ENCODE measurements at regions of chr6 and their contacts with region 1.

Region 1: GRCh38 chr6:106512048-106512967 is 117.0 kb downstream of the RTN4IP1 start:
- DNase-seq: peak; percentile 96
- H3K4me3 Mint-ChIP-seq: peak overlapping the region; percentile 82
- H3K27ac Mint-ChIP-seq: peak overlapping the region; percentile 96
- H3K4me1 Mint-ChIP-seq: peaks cover 50% of the 10 kb centered on the region
- H3K27me3 Mint-ChIP-seq: peaks cover 22% of the 10 kb centered on the region

Region 2: DNA sequence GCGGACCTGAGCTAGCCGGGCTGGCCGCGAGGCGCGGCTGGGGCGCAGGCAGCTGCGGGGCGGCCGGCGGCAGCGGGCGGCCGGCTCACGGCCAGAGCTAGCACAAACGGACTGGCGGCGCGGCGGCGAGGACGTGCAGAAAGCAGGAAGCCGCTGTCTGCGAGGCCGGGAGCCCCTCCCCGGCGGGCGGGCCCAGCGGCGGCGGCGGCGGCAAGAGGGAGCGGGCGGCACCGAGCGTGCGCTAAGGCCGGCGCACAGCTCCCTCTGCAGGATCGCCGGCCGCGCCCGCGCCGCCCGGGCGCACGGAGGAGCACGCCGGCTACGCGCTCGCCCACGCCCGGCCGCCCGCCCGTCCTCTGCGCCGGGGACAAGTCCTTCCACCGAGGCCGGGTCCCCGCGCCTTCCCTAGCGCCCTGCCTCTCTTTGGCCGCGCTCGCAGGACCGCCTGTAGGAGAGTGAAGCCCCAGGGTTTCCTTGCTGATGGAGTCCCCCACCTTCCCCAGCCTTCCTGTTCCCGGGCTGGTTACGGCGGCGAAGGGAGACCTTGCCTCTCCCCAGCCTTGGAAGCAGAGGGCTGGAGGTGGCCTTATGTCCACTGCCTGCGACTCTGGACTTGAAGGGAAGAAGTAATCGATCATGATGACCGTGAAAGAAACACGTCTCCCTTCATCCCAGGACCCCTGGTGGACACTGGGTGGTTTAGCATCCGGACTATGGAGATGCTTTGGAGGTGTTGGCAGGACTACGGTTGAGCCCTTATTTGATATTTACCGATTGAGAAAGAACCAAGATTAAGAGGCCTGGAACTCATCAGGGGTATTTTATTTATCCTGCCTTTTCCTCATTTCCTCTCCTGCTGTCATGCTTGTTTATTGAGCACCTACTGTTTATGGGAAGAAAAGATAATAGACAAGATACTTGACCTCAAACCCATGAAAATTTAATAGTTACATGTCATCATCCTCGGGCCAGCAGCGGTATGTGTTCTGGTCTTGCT is 1109.1 kb before region 1 on chr6 and contains the start of gene PREP:
- intact Hi-C with region 1: loop called (anchors 10 kb)
- DNase-seq: peak; percentile 96
- H3K4me3 Mint-ChIP-seq: peak within 1 kb of the TSS; percentile 95
- H3K27ac Mint-ChIP-seq: peak within 1 kb of the TSS; percentile 87
- H3K4me1 Mint-ChIP-seq: peaks cover 45% of the 10 kb centered on the region
- H3K27me3 Mint-ChIP-seq: peaks cover 10% of the 10 kb centered on the region
- total RNA-seq, gene PREP: 55.2 and 56.2 TPM in 2 replicates

Region 3: DNA sequence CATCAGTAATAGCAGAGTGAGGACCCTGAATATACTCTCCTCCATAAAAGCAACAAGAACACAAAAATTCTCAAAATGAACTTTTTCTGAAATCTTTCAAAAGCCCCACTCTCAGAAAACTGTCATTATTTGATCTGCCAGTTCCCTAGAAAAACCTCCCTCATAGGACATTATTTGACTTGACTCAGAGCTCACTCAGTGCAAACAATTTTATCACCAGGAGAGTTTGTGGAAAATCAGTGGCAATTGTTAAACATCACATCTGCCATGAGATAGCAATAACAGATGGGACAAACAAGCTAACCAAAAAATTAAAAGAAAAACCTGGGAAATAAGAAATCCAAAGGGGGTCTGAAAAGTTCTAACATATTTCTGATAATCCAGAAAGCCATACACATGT is 286.7 kb before region 1 on chr6:
- intact Hi-C with region 1: no loop called
- DNase-seq: no peak
- H3K4me3 Mint-ChIP-seq: no peak overlapping the region
- H3K27ac Mint-ChIP-seq: no peak overlapping the region
- H3K4me1 Mint-ChIP-seq: peaks cover 32% of the 10 kb centered on the region
- H3K27me3 Mint-ChIP-seq: no peaks in the 10 kb centered on the region

Region 4: DNA sequence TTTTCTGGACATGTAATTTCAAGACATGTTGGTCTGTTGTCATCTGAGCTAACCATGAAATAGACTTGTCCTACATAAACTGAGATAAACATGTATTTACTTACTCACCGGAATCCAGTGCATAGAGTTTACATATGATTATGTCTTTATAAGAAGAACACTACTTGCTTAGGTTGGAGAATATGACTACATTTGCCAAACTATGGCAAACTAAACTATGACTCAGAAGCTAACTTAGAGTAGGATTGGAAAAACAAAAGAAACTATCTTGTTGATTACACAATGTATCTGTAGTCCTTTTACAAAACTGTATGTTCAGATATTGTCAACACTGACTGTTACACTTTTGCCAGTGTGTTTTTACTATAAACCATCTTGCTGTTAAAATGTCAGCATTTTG is 38.5 kb before region 1 on chr6:
- intact Hi-C with region 1: loop called (anchors 5 kb)
- DNase-seq: no peak
- H3K4me3 Mint-ChIP-seq: no peak overlapping the region
- H3K27ac Mint-ChIP-seq: no peak overlapping the region
- H3K4me1 Mint-ChIP-seq: peaks cover 3% of the 10 kb centered on the region
- H3K27me3 Mint-ChIP-seq: peaks cover 13% of the 10 kb centered on the region

Region 5: DNA sequence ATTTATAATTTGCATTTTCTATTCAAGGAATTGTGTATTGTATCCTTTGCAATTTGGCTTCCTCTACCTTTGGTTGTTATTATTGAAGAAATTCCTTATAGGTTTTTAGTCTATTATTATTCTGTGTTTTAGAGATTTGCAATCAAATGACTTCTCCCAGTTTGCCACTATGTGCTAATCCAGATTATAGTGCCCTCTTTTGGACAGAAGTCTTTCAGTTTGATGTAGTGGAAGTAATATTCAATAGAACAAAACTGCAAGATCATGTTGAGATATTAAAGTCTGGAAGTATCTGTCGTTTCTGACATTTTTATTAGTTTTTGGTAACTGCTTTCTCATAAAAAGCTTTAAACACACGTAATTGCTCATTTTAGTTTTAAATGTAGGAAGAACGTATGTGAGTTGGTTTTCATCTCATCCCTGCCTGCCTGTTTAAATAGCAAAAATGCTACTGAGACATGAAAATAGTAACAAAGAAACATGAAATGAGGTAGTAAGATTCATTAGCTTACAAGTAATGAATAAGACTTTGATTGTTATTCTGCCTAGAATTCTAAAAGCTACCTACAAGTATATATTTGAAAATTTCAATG is 44.2 kb after region 1 on chr6:
- intact Hi-C with region 1: loop called (anchors 1 kb)
- DNase-seq: no peak
- H3K4me3 Mint-ChIP-seq: no peak overlapping the region
- H3K27ac Mint-ChIP-seq: no peak overlapping the region
- H3K4me1 Mint-ChIP-seq: peaks cover 24% of the 10 kb centered on the region
- H3K27me3 Mint-ChIP-seq: no peaks in the 10 kb centered on the region

Region 6: GRCh38 chr6:106979427-106979884 is 467.1 kb after region 1 on chr6:
- intact Hi-C with region 1: loop called (anchors 5 kb)
- DNase-seq: peak; percentile 93
- H3K4me3 Mint-ChIP-seq: no peak overlapping the region
- H3K27ac Mint-ChIP-seq: no peak overlapping the region
- H3K4me1 Mint-ChIP-seq: peaks cover 3% of the 10 kb centered on the region
- H3K27me3 Mint-ChIP-seq: peaks cover 36% of the 10 kb centered on the region

Measured in activated CD4-positive, alpha-beta T cell treated with anti-CD3 and anti-CD28 coated beads, Interleukin-2, amount 10 ng/mL, durations not matched to agents 24 days and 14 days (primary cell).